ENCODE measurements at regions of chr3 and their contacts with region 1.

Region 1: DNA sequence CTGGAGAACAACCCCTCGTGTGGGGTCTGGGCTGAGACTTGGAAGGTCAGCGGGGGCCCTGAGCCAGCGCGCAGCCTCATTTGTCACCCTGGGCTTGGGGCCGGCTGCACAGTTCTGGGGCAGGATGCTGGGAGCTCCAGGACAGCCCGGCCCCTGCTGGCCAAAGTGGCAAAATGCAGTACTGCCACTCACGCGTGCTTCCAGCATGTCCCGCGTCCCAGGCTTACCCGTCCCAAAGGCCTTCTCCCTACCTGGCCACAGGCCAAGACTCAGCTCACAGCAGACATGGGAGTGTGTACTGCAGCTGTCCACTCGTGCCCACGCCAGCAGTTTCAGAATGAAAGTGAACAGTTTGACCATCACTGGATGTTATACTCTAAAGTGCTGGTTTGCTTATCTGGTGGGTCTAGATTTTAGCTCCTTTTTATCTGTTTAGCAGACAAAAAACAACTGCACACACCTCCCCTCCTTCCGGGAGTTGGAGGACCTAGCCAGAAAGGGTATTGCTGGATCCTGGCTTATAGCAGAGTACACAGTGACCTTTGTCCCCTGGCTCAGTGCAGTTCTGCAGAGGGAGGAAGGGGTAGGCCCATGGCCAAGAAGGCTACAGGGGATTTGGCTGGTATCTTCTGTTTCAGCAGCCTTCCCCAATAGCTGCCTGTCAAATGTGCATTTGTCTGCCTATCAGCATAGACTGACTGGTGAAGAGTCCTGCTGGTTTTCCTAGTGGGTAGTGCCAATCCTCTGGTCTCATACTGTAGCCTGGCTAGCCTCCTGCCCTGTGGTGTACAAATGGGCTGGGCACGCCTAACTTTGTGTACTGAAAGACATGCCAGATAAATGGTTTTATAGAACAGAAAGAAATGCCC is 23.2 kb upstream of the IP6K2 start:
- DNase-seq: peak in 1 of 2 experiments; percentile 40
- H3K4me3 ChIP-seq: no peak overlapping the region
- H3K27ac ChIP-seq: no peak overlapping the region
- H3K4me1 ChIP-seq: no peaks in the 10 kb centered on the region
- H3K27me3 ChIP-seq: no peaks in the 10 kb centered on the region
- CTCF ChIP-seq: peak; percentile 36; the same call in 1 of the 2 replicates

Region 2: DNA sequence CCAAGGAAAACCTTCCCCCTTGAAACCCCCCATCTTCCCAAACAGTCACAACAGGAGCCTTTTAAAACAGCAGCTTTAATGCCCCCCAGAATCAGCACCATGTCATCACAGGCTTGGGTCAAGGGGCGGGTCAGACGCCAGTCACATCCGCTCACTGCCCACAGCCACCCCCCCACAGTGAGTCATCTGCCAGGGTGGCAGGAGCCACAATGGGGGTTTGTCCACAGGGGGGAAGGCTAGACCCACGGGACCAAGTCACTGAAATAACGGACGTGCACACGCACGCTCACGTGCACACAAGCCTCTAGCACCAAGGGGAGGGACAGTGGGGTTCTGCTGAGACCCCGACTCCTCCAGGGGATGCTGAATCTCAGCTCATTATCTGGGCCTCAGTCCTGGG is 176.2 kb before region 1 on chr3:
- CTCF ChIA-PET with region 1: no interaction called
- POLR2A ChIA-PET with region 1: no interaction called
- intact Hi-C with region 1: no loop called
- DNase-seq: peak in 1 of 2 experiments; percentile 63
- H3K4me3 ChIP-seq: no peak overlapping the region
- H3K27ac ChIP-seq: no peak overlapping the region
- H3K4me1 ChIP-seq: peaks cover 7% of the 10 kb centered on the region; the same call in 1 of the 2 replicates
- H3K27me3 ChIP-seq: no peaks in the 10 kb centered on the region
- CTCF ChIP-seq: no peak

Region 3: DNA sequence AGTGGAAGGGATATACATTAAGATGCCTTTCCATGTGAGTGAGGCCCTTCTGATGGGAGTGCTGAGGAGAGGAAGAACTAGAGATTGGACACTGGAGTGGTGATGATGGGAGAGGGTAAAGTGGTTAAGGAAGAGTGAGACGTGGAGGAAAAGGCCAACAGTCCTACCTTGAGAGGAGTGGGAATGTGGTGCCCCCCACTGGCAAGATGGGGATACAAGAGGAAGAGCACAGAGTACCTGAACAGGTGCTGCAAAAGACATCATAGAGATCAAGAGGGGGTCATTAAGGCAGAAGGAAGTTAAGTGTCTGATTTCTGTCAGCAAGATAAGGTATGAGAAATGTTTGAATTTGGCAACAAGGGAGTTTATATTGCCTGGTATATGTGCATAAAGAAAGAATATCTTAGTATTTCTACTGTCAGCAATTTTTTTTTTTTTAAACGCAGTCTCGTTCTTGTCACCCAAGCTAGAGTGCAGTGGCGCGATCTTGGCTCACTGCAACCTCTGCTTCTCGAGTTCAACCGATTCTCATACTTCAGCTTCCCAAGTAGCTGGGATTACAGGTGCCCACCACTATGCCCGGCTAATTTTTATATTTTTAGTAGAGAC is 212.4 kb after region 1 on chr3:
- CTCF ChIA-PET with region 1: no interaction called
- POLR2A ChIA-PET with region 1: no interaction called
- intact Hi-C with region 1: loop called (anchors 10 kb)
- DNase-seq: peak in 1 of 2 experiments; percentile 32
- H3K4me3 ChIP-seq: no peak overlapping the region
- H3K27ac ChIP-seq: no peak overlapping the region
- H3K4me1 ChIP-seq: no peaks in the 10 kb centered on the region
- H3K27me3 ChIP-seq: no peaks in the 10 kb centered on the region
- CTCF ChIP-seq: peak; percentile 39; the same call in 1 of the 2 replicates

Measured in PC-9 (cell line).